ENCODE measurements at regions of chr10 and their contacts with region 1.

Region 1: GRCh38 chr10:35451151-35452016 is 115.1 kb downstream of the CCNY start:
- DNase-seq: peak; percentile 75
- ATAC-seq: peak; percentile 65

Region 2: GRCh38 chr10:35005868-35006267 is 445.5 kb before region 1 on chr10:
- intact Hi-C with region 1: no loop called
- DNase-seq: no peak
- ATAC-seq: no peak

Region 3: GRCh38 chr10:35379226-35380137 is 71.9 kb before region 1 on chr10:
- intact Hi-C with region 1: loop called (anchors 5 kb)
- DNase-seq: no peak
- ATAC-seq: peak; percentile 81

Region 4: GRCh38 chr10:35409094-35409582 is 42.2 kb before region 1 on chr10:
- intact Hi-C with region 1: no loop called
- DNase-seq: no peak
- ATAC-seq: peak; percentile 71